Cardiac septum (tissue), 1 donor: ENCODE measurements at regions of chr17 and their contacts with region 1.

Region 1: DNA sequence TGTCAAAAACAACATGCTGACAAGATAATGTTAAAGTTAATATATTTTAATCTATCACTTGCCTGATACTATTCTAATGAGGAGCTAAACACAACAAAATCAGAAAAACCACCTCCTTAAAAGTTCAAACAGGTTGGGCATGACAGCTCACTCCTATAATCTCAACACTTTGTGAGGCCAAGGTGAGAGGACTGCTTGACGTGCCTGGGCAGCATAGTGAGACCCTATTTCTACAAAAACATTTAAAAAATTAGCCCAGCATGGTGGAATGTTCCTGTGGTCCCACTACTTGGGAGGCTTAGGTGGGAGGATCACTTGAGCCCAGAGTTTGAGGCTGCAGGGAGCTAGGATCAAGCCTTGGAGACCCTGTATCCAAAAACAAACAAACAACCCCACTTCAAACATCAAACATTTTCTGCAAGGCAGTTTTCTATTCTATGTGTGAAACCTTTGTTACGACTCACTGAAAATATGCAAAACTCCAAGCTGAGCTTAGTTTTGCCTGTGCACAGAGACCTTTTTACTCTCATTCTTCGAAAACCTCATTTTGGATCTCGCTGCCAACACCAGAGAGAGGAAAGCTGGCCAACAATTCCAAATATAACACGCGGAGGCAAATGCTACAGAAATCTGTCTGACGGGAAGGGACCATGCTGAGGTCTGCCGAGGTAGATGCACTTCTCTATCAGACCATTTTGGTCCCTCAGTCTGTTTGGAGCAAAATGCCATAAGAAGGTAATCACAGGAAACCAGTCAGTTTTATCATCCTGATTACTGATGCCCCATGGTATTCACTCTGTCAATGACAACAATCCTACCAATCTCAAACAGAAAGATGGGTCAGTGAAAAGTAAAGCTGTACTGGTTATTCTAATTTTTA is 6.2 kb downstream of the PHF12 start:
- DNase-seq: no peak

Region 2: DNA sequence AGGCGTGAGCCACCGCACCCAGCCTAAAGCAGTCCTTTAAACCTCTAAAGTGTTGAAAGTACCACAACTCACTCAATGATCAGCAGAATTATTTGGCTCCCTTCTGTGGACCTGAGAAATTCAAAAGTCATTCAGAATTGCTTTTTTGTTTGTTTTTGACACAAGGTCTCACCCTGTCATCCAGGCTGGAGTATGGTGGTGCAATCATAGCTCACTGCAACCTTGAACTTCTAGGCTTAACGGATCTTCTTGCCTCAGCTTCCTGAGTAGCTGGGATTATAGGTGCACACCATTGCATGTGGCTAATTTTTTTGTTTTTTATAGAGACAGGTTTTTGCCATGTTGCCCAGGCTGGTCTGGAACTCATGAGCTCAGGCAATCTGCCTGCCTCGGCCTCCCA is 157.0 kb before region 1 on chr17:
- intact Hi-C with region 1: no loop called
- DNase-seq: no peak

Region 3: GRCh38 chr17:28901866-28902818 is 43.0 kb before region 1 on chr17:
- intact Hi-C with region 1: loop called (anchors 1 kb)
- DNase-seq: no peak

Region 4: GRCh38 chr17:29116804-29117772 is 172.0 kb after region 1 on chr17:
- intact Hi-C with region 1: no loop called
- DNase-seq: peak; percentile 92

Region 5: DNA sequence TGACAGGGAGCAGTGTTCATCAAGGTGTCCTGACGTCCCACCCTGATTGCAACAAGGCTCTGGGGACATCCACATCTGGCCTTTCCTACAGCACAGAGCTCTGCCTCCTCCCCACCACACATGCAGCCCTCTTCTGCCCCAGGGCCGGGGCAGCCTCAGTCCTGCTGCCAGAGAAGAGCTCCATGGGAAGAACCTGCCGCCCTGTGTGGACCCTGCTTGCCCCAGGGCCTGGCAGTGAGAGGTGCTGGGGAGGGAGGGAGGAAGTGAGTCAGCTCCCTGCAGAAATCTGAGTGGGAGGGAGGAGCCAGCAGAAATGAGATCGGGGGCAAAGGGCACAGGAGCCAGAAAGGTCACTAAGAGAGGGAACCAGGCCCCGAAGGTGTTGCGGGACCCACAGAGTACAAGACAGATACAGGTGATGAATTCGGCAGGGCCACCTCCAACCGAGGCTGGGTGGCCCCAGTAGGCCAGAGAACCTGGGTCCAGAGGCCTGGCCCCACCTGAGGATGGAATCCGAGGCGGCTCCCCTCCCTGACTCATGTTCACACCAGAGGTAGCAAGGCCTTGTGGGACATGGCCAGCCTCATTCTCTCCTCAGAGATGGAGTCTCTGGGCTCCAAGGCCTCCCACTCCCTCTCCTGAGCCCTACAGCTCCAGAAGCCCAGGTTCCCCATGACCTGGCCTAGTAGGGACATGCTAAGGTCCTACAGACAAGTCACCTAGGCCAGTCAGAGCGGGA is 210.3 kb after region 1 on chr17:
- intact Hi-C with region 1: no loop called
- DNase-seq: no peak